Activated CD8-positive, alpha-beta T cell treated with anti-CD3 and anti-CD28 coated beads, Interleukin-2, amount 10 ng/mL, durations not matched to agents 7 days and 5 days (primary cell): ENCODE measurements at regions of chr2 and their contacts with region 1.

Region 1: GRCh38 chr2:25276569-25277465 is 64.9 kb downstream of the DNMT3A start:
- DNase-seq: peak; percentile 79
- ATAC-seq: peak; percentile 60
- H3K4me3 Mint-ChIP-seq: peak overlapping the region; percentile 65
- H3K27ac Mint-ChIP-seq: peak overlapping the region; percentile 96
- H3K4me1 Mint-ChIP-seq: peaks cover 78% of the 10 kb centered on the region
- H3K27me3 Mint-ChIP-seq: no peaks in the 10 kb centered on the region

Region 2: DNA sequence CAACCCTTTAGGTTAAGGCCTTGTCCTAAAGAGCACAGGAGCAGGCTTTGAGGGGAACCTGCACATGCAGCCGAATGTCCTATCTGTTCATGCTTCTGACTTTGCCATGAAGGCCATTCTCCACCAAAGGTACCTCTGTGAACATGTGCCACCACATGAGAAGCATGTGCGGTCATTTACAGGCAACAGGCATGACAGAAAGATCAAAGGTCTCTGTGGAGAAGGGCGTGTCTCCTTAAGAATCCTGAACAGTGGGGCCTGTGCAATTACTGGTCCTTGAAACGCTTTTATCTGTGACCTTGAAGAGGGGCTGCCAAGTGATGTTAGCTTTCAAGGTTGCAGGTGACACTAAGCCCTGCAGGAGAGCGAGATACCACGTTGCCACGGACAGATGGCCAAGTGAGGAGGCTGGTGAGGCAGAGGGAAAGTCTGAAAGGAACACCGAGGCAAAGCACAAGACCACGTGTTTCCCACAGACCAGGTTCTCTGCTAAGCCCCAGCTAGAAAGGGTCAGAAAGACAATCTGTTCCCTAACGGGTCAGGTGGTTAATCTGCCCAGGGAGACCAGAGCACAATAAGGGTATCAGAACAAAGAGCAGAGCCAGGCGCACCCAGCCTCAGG is 89.0 kb before region 1 on chr2:
- CTCF ChIA-PET with region 1: no interaction called
- POLR2A ChIA-PET with region 1: no interaction called
- DNase-seq: no peak
- ATAC-seq: no peak
- H3K4me3 Mint-ChIP-seq: no peak overlapping the region
- H3K27ac Mint-ChIP-seq: no peak overlapping the region
- H3K4me1 Mint-ChIP-seq: no peaks in the 10 kb centered on the region
- H3K27me3 Mint-ChIP-seq: peaks cover 5% of the 10 kb centered on the region

Region 3: GRCh38 chr2:25252281-25253105 is 24.3 kb before region 1 on chr2:
- CTCF ChIA-PET with region 1: interaction called, 11 read pairs
- POLR2A ChIA-PET with region 1: interaction called, 12 read pairs
- DNase-seq: peak; percentile 68
- ATAC-seq: peak; percentile 70
- H3K4me3 Mint-ChIP-seq: peak overlapping the region; percentile 78
- H3K27ac Mint-ChIP-seq: peak overlapping the region; percentile 80
- H3K4me1 Mint-ChIP-seq: peaks cover 27% of the 10 kb centered on the region
- H3K27me3 Mint-ChIP-seq: no peaks in the 10 kb centered on the region

Region 4: DNA sequence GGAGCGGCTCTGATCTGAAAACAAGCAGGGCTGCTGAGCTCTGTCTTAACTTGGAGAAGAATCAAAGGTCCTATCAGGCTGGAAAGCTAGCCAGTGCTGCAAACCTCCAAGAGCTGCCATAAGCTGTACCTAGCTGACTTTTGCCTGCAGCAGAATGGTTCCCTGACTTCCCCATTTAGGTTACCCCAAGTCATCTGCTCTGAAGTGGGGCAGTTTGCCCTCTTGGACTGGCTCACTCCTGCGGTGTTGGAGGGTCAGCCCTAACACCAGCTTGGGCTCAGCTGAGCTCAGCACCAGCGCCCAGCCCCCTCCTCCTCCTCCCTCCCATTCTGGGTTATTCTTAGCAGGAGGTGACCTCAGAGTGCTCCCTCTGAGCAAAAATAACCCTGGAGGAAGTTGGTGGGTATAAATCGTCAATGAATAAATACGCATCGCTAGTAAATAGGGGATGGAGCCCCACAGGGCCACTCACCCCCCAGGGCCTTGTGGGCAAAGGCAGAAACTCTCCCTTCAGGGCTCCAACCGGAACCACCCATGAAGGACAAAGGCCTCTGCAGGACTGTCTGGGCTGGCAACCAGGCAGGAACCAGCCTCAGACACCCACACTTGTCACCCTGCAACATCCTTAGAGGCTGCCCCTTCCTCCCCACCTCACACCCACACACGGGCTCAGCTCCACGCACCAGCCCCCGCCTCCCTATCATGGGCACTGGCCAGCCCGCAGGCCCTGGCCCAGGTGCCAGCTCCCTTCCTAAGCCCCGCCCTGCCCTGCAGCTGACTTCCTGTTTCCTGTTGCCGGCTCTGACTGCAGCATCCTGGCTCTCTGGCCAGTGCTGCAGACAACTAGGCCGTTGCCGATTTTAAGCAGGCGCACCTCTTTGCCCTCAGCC is 18.0 kb after region 1 on chr2:
- CTCF ChIA-PET with region 1: interaction called, 62 read pairs
- POLR2A ChIA-PET with region 1: interaction called, 49 read pairs
- DNase-seq: peak; percentile 92
- ATAC-seq: peak; percentile 92
- H3K4me3 Mint-ChIP-seq: peak overlapping the region; percentile 70
- H3K27ac Mint-ChIP-seq: peak overlapping the region; percentile 93
- H3K4me1 Mint-ChIP-seq: peaks cover 73% of the 10 kb centered on the region
- H3K27me3 Mint-ChIP-seq: no peaks in the 10 kb centered on the region

Region 5: GRCh38 chr2:25309402-25309801 is 32.6 kb after region 1 on chr2:
- CTCF ChIA-PET with region 1: interaction called, 16 read pairs
- POLR2A ChIA-PET with region 1: interaction called, 15 read pairs
- DNase-seq: peak; percentile 79
- ATAC-seq: peak; percentile 45
- H3K4me3 Mint-ChIP-seq: no peak overlapping the region
- H3K27ac Mint-ChIP-seq: peak overlapping the region; percentile 37
- H3K4me1 Mint-ChIP-seq: peaks cover 77% of the 10 kb centered on the region
- H3K27me3 Mint-ChIP-seq: no peaks in the 10 kb centered on the region

Region 6: GRCh38 chr2:25331686-25332365 is 55.0 kb after region 1 on chr2:
- CTCF ChIA-PET with region 1: interaction called, 10 read pairs
- POLR2A ChIA-PET with region 1: no interaction called
- DNase-seq: no peak
- ATAC-seq: no peak
- H3K4me3 Mint-ChIP-seq: no peak overlapping the region
- H3K27ac Mint-ChIP-seq: no peak overlapping the region
- H3K4me1 Mint-ChIP-seq: peaks cover 51% of the 10 kb centered on the region
- H3K27me3 Mint-ChIP-seq: no peaks in the 10 kb centered on the region